Dorsolateral prefrontal cortex (tissue), 120 donors: ENCODE measurements at regions of chr5 and their contacts with region 1.

Region 1: GRCh38 chr5:142874537-142874936 is 104.4 kb downstream of the ARHGAP26 start:
- DNase-seq: peak in 1 of 10 donors; percentile 37
- H3K4me3 ChIP-seq: no peak overlapping the region
- H3K27ac ChIP-seq: peak overlapping the region in 3 of 59 donors; percentile 8 to 49 (median 24)
- H3K27me3 ChIP-seq: no peaks in the 10 kb centered on the region
- CTCF ChIP-seq: no peak

Region 2: DNA sequence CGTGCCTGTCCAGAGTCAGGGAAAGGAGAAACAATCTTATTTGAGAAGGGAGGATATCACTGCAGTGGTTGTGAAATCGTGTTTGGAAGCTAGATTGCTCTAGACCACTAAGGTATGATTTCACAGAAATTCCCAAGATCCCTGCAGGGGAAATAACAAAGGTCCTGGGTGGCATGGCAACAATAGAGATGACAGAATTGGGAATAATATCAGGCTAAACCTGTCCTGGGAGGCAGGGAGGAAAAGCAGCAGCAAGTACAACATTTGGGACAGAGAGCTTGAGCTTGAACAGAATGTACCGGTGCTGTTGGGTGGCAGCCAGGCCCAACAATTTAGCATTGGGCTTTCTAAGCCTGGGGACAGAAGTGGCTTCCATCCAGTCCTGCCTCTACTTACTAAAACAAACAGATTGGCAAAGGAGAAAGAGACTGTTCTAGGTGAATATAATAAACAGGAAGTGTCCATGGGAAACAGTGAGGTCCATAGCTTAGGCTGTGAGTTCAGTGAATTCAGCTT is 121.4 kb before region 1 on chr5:
- intact Hi-C with region 1: loop called in 1 of 2 experiments (anchors 10 kb)
- DNase-seq: peak in 7 of 10 donors; percentile 35 to 84 (median 66)
- H3K4me3 ChIP-seq: peak overlapping the region in 1 of 59 donors; percentile 8
- H3K27ac ChIP-seq: peak overlapping the region in 58 of 59 donors; percentile 23 to 90 (median 78)
- H3K27me3 ChIP-seq: no peaks in the 10 kb centered on the region
- CTCF ChIP-seq: peak in 1 of 56 donors; percentile 9

Region 3: GRCh38 chr5:142769741-142770631 is 104.6 kb before region 1 on chr5 and contains the start of gene ARHGAP26:
- intact Hi-C with region 1: loop called in 1 of 2 experiments (anchors 2 kb)
- DNase-seq: peak; percentile 93 to 100 (median 98)
- H3K4me3 ChIP-seq: peak within 1 kb of the TSS; percentile 47 to 97 (median 88)
- H3K27ac ChIP-seq: peak within 1 kb of the TSS; percentile 53 to 96 (median 89)
- H3K27me3 ChIP-seq: no peaks in the 10 kb centered on the region
- CTCF ChIP-seq: peak in 43 of 56 donors; percentile 6 to 71 (median 39)
- total RNA-seq, gene ARHGAP26: 84.5 to 257 (median 180) TPM

Region 4: GRCh38 chr5:143016777-143017516 is 142.4 kb after region 1 on chr5:
- intact Hi-C with region 1: no loop called
- DNase-seq: peak in 1 of 10 donors; percentile 24
- H3K4me3 ChIP-seq: no peak overlapping the region
- H3K27ac ChIP-seq: peak overlapping the region in 10 of 59 donors; percentile 2 to 57 (median 11)
- H3K27me3 ChIP-seq: no peaks in the 10 kb centered on the region
- CTCF ChIP-seq: peak in 45 of 56 donors; percentile 18 to 56 (median 38)

Region 5: GRCh38 chr5:143119291-143119769 is 244.8 kb after region 1 on chr5:
- intact Hi-C with region 1: no loop called
- DNase-seq: no peak
- H3K4me3 ChIP-seq: no peak overlapping the region
- H3K27ac ChIP-seq: peak overlapping the region in 25 of 59 donors; percentile 5 to 70 (median 41)
- H3K27me3 ChIP-seq: no peaks in the 10 kb centered on the region
- CTCF ChIP-seq: no peak